ENCODE measurements at regions of chr21 and their contacts with region 1.

Region 1: DNA sequence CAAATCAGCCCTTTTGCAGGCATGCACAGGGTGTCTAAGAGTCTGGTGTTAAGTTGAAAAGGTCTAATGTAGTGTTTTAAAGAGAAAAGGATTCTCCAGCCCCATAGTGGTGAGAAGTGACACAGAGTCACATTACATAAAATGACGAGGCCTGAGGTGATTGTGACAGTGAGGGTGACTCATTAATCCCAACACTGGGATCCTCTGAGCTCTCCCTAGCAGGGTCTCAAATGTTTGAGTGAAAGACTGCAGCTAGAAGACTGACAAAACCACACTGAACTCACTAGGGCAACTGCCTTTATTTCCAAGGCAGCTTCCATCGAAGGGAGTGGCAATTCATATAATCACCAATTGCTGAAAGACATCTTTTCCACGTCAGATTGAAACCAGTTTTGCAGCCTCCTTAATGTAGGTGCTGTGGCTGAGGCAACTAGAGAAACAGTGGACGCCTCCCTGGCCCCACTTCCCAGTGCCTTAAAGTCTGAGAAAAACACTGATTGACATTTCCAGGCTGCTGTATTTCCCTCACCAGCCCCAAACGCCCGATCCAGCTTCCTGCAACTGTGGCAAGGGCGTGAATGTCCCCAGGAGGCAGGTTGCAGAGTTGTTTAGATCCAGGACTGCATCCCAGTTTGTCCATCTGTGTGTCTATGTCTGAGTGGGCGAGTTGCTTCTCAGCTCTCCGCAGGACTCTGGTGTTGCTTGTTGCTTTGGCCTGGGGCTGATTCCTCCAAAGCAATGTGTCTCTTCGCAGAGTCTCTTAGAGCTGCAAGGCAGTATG is 81.4 kb downstream of the RUNX1 start:
- DNase-seq: peak; percentile 73
- ATAC-seq: peak; percentile 70
- H3K4me3 Mint-ChIP-seq: peak overlapping the region; percentile 61
- H3K27ac Mint-ChIP-seq: peak overlapping the region; percentile 99
- H3K4me1 Mint-ChIP-seq: peaks cover 91% of the 10 kb centered on the region
- H3K27me3 Mint-ChIP-seq: no peaks in the 10 kb centered on the region

Region 2: GRCh38 chr21:34933609-34934335 is 33.9 kb before region 1 on chr21:
- CTCF ChIA-PET with region 1: interaction called, 5 read pairs
- POLR2A ChIA-PET with region 1: interaction called, 3 read pairs
- intact Hi-C with region 1: loop called (anchors 1 kb)
- DNase-seq: peak; percentile 40
- ATAC-seq: peak; percentile 85
- H3K4me3 Mint-ChIP-seq: peak overlapping the region; percentile 68
- H3K27ac Mint-ChIP-seq: peak overlapping the region; percentile 96
- H3K4me1 Mint-ChIP-seq: peaks cover 84% of the 10 kb centered on the region
- H3K27me3 Mint-ChIP-seq: no peaks in the 10 kb centered on the region

Region 3: DNA sequence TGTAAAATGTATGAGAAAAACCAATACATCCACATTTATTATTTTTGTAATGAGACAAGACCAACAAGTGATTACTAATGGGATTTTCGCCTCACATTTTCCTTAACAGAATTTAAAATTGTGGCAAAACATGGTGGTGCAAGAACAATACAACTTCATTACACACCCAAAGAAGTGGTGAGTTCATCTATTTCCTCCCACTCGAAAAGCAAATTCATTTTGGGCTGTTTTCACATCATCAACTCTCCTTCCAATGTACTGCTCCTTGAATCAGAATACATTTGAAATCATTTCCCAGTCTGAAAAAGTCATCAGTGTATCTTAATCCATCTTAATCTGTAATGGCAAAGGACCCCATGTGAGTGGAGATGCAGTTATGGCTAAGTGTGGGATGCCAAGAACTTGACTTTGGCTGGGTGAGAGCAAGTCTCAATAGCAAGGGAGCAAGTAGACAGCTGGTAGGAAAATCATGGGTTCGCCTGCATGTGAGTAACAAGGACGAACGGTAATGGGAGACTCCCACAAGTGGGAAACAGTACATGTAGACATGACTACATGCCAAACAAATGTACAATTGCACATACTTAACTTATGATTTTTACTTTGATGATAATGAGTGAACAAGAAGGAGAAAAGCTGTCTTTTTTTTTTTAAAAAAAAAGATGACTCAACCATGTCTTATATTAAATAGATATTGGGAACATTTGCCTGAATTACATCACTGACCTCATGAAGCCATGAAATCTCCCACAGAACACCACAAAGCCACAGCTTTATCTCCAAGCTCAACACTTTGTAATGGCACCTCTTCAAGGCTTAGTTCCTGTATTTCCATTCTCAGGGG is 35.4 kb after region 1 on chr21:
- CTCF ChIA-PET with region 1: interaction called, 3 read pairs
- POLR2A ChIA-PET with region 1: interaction called, 14 read pairs
- intact Hi-C with region 1: no loop called
- DNase-seq: no peak
- ATAC-seq: peak; percentile 33
- H3K4me3 Mint-ChIP-seq: no peak overlapping the region
- H3K27ac Mint-ChIP-seq: peak overlapping the region; percentile 78
- H3K4me1 Mint-ChIP-seq: peaks cover 94% of the 10 kb centered on the region
- H3K27me3 Mint-ChIP-seq: no peaks in the 10 kb centered on the region

Region 4: GRCh38 chr21:35026617-35027562 is 59.2 kb after region 1 on chr21:
- CTCF ChIA-PET with region 1: interaction called, 4 read pairs
- POLR2A ChIA-PET with region 1: interaction called, 3 read pairs
- intact Hi-C with region 1: loop called (anchors 1 to 2 kb)
- DNase-seq: peak; percentile 92
- ATAC-seq: peak; percentile 68
- H3K4me3 Mint-ChIP-seq: peak overlapping the region; percentile 75
- H3K27ac Mint-ChIP-seq: peak overlapping the region; percentile 97
- H3K4me1 Mint-ChIP-seq: peaks cover 88% of the 10 kb centered on the region
- H3K27me3 Mint-ChIP-seq: no peaks in the 10 kb centered on the region

Region 5: GRCh38 chr21:35127851-35128250 is 160.2 kb after region 1 on chr21:
- CTCF ChIA-PET with region 1: no interaction called
- POLR2A ChIA-PET with region 1: no interaction called
- intact Hi-C with region 1: no loop called
- DNase-seq: no peak
- ATAC-seq: no peak
- H3K4me3 Mint-ChIP-seq: no peak overlapping the region
- H3K27ac Mint-ChIP-seq: no peak overlapping the region
- H3K4me1 Mint-ChIP-seq: no peaks in the 10 kb centered on the region
- H3K27me3 Mint-ChIP-seq: no peaks in the 10 kb centered on the region

Region 6: GRCh38 chr21:35138665-35139381 is 171.1 kb after region 1 on chr21:
- CTCF ChIA-PET with region 1: no interaction called
- POLR2A ChIA-PET with region 1: no interaction called
- intact Hi-C with region 1: loop called in 1 of 2 experiments (anchors 1 kb)
- DNase-seq: peak; percentile 83
- ATAC-seq: peak; percentile 91
- H3K4me3 Mint-ChIP-seq: peak overlapping the region; percentile 65
- H3K27ac Mint-ChIP-seq: peak overlapping the region; percentile 93
- H3K4me1 Mint-ChIP-seq: peaks cover 38% of the 10 kb centered on the region
- H3K27me3 Mint-ChIP-seq: no peaks in the 10 kb centered on the region

Region 7: DNA sequence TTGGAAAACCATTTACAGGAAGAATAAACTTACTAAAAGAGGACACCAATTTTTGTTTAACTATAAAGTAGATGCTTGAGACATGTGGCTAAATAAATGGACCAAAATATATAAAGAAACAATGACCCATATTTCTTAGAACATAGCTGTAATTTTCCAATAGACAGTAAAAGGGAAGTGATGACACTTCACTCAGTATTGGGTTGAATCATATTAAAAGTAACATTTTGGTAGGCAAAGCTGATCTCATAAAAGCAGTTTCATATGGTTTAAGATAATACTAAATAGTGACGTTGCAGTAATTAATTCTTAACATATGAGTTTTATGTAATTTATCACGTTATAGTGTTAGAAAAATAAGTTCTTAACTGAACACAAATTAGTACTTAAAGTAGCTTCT is 390.3 kb after region 1 on chr21:
- CTCF ChIA-PET with region 1: no interaction called
- POLR2A ChIA-PET with region 1: no interaction called
- intact Hi-C with region 1: loop called in 1 of 2 experiments (anchors 5 kb)
- DNase-seq: no peak
- ATAC-seq: peak; percentile 86
- H3K4me3 Mint-ChIP-seq: no peak overlapping the region
- H3K27ac Mint-ChIP-seq: peak overlapping the region; percentile 74
- H3K4me1 Mint-ChIP-seq: peaks cover 15% of the 10 kb centered on the region
- H3K27me3 Mint-ChIP-seq: no peaks in the 10 kb centered on the region

Measured in activated CD4-positive, alpha-beta T cell treated with anti-CD3 and anti-CD28 coated beads for 36 hours (primary cell).